ENCODE measurements at regions of chr5 and their contacts with region 1.

Region 1: DNA sequence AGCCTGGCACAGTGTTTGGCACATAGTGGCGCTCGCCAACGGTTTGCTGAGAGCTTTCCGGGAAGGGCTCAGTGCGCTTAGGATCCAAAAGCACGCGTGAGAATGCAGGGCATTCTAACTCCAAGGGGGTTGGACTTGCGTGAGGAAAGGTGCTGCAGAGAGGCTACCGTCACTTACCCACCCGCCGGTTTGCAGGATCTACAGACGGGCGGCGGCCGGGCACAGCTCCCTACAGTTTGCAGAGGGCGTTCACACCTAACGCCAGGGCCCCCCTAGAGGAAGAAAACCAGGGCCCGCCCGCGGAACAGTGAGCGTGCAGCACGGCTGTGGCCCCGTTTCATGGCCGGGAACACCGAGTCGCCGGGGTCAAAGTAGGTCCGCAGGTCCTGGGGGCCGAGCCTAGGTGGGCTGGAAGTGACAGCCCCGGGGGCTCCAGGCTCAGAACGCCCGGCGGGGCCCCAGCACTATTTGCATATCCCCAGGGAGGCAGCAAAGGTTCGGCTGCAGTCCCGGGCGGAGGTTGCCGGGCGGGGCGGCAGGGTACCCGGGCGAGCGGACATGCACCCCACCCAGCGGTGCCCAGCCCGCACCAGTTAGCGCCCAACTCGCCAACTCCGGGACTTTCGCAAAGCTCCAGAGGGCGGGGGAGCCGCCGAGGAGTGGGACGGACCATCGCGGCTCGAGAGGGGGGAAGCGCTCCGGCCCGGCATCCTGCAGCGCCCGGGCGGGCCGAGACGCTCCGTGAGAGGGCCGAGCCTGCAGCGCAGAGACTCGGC is 526 bp upstream of the GALNT10 start:
- DNase-seq: peak in 1 of 2 donors; percentile 92
- H3K4me3 ChIP-seq: peak overlapping the region; percentile 93 to 98
- H3K27ac ChIP-seq: peak overlapping the region; percentile 76 to 79
- H3K4me1 ChIP-seq: peaks cover 0 to 21% of the 10 kb centered on the region in 2 donors
- H3K27me3 ChIP-seq: no peaks in the 10 kb centered on the region
- CTCF ChIP-seq: peak; percentile 28 to 43 (median 37)

Region 2: DNA sequence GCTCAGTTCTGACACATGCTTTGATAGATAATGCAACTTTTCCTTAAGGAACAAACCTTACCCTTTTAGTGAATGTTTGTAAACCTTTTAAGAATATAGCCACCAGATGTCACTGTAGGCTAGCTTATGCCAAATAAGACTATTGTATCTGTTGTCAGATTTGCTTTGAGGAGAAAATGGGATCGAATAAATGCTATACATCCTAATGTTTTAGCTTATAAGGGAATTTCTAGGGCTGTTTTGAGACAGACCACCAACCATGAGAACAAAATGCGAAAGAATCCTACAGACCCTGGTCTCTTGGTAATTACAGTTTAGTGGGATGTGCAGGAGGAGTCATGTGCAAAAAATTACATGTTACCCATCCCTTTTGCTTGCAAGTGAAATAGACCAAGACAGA is 1657.3 kb before region 1 on chr5:
- intact Hi-C with region 1: loop called (anchors 10 kb)
- DNase-seq: no peak
- H3K4me3 ChIP-seq: no peak overlapping the region
- H3K27ac ChIP-seq: no peak overlapping the region
- H3K4me1 ChIP-seq: no peaks in the 10 kb centered on the region
- H3K27me3 ChIP-seq: no peaks in the 10 kb centered on the region
- CTCF ChIP-seq: peak; percentile 48 to 66 (median 59)

Region 3: DNA sequence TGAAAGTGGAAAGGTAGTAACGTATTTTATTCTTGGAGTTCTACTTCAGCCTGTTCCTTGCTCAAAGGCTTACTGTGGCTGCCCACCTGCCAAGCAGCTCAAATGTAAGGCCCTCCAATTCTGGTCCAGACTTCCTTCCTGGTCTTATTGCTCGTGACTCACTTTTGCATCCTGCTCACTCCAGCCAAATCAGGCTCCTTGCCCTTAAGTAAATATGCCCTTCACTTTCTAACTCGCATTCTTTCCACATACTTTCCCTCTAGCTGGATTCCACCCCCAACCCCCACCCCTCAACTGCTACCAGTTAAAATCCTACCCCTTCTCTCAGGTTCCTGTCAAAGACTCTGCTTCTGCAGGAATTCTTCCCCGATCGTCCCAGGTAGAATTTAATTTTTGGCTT is 97.1 kb after region 1 on chr5:
- intact Hi-C with region 1: loop called (anchors 2 kb)
- DNase-seq: peak in 1 of 2 donors; percentile 79
- H3K4me3 ChIP-seq: no peak overlapping the region
- H3K27ac ChIP-seq: peak overlapping the region; percentile 71 to 87
- H3K4me1 ChIP-seq: peaks cover 0 to 39% of the 10 kb centered on the region in 2 donors
- H3K27me3 ChIP-seq: no peaks in the 10 kb centered on the region
- CTCF ChIP-seq: no peak

Region 4: GRCh38 chr5:154302161-154302560 is 112.2 kb after region 1 on chr5:
- intact Hi-C with region 1: loop called (anchors 5 kb)
- DNase-seq: peak in 1 of 2 donors; percentile 76
- H3K4me3 ChIP-seq: peak overlapping the region in 1 of 2 donors; percentile 45
- H3K27ac ChIP-seq: peak overlapping the region; percentile 43 to 72
- H3K4me1 ChIP-seq: peaks cover 0 to 10% of the 10 kb centered on the region in 2 donors
- H3K27me3 ChIP-seq: no peaks in the 10 kb centered on the region
- CTCF ChIP-seq: no peak

Region 5: GRCh38 chr5:154368041-154368800 is 178.2 kb after region 1 on chr5:
- intact Hi-C with region 1: loop called (anchors 2 kb)
- DNase-seq: peak in 1 of 2 donors; percentile 89
- H3K4me3 ChIP-seq: no peak overlapping the region
- H3K27ac ChIP-seq: peak overlapping the region; percentile 78 to 79
- H3K4me1 ChIP-seq: peaks cover 15 to 54% of the 10 kb centered on the region in 2 donors
- H3K27me3 ChIP-seq: no peaks in the 10 kb centered on the region
- CTCF ChIP-seq: no peak

Region 6: GRCh38 chr5:154405078-154405792 is 215.2 kb after region 1 on chr5:
- intact Hi-C with region 1: loop called (anchors 2 kb)
- DNase-seq: peak; percentile 28 to 89
- H3K4me3 ChIP-seq: peak overlapping the region; percentile 42 to 64
- H3K27ac ChIP-seq: no peak overlapping the region
- H3K4me1 ChIP-seq: peaks cover 4 to 5% of the 10 kb centered on the region in 2 donors
- H3K27me3 ChIP-seq: no peaks in the 10 kb centered on the region
- CTCF ChIP-seq: peak; percentile 78 to 92 (median 87)

Region 7: DNA sequence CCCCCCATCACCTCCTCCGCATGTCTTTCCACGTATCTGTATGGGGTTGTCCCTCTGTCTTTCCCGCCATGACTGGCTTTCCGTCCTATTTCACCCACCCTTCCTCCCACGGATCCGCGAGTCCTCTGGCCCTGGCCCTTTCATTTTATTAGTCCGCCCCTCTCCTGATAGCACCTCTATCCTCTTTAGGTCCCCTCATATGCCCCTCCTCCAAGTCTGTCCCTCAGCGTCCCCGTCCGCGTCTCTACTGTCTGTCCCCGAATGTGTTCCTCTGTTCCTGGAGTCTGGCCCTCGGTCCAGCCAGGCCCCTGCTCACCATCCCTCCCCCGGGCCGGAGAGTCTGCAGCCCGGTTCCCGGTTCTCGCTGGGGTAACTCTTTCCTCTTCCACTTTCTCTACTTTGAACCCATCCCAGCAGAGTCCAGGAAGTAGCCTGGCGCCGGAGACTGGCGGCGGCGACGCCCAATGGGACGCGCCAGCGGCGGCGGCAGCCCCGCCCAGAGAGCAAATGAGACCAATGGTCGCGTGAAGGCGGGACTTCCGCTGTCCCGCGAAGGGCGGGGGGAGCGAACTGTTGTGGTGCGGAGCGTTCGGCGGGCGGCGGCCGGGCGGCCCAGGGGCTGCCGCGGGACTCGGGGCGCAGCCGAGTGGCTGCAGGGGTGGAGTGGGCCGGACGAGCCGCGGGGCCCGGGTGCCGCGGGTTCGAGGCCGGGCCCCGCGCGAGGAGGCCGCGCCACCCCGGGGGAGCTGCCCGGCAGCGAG is 255.6 kb after region 1 on chr5 and contains the start of gene SAP30L:
- intact Hi-C with region 1: loop called (anchors 5 kb)
- DNase-seq: peak; percentile 96 to 99
- H3K4me3 ChIP-seq: peak within 1 kb of the TSS; percentile 97 to 99
- H3K27ac ChIP-seq: peak within 1 kb of the TSS; percentile 86 to 92
- H3K4me1 ChIP-seq: peaks cover 4 to 24% of the 10 kb centered on the region in 2 donors
- H3K27me3 ChIP-seq: no peaks in the 10 kb centered on the region
- CTCF ChIP-seq: no peak
- total RNA-seq, gene SAP30L: 36.5 TPM